ENCODE measurements at regions of chr13 and their contacts with region 1.

Region 1: DNA sequence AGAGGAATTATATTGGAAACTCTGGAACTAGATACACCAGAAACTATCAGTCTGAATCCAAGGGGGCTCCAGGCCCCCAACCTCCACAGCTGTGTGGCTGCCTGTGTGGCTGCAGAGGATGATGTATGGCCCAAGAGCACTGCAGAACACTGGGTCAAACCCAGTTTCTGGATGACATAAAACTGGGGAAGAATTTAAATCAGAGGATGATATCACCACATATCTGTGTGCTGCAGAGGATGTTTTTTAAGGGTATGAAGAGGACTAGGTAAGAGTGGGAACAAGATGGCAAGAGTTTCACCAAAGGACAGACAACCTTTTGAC is 226.4 kb downstream of the SUCLA2 start:
- DNase-seq: no peak
- H3K4me3 ChIP-seq: no peak overlapping the region
- H3K27ac ChIP-seq: no peak overlapping the region
- H3K4me1 ChIP-seq: no peaks in the 10 kb centered on the region
- H3K27me3 ChIP-seq: no peaks in the 10 kb centered on the region
- CTCF ChIP-seq: no peak
- POLR2A ChIP-seq: no peak

Region 2: GRCh38 chr13:46831588-46832194 is 942.9 kb before region 1 on chr13:
- intact Hi-C with region 1: loop called (anchors 2 kb)
- DNase-seq: peak; percentile 10
- H3K4me3 ChIP-seq: no peak overlapping the region
- H3K27ac ChIP-seq: no peak overlapping the region
- H3K4me1 ChIP-seq: no peaks in the 10 kb centered on the region
- H3K27me3 ChIP-seq: no peaks in the 10 kb centered on the region
- CTCF ChIP-seq: peak; percentile 23 to 66 (median 58)
- POLR2A ChIP-seq: no peak

Region 3: DNA sequence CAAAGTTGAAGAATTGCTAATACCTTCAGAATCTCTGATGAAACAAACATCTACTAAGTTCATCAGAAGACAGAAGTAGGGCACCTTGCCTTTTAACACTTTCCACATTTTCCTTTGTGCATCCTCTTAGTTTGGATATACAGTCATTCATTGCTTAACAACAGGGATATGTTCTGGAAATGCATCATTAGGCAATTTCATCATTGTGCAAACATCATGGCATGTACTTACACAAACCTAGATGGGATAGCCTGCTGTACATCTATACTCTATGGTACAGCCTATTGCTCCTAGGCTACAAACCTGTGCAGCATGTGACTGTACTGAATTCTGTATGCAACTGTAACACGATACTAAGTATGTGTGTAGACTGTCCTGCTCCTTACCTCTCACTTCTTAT is 56.6 kb after region 1 on chr13:
- intact Hi-C with region 1: no loop called
- DNase-seq: no peak
- H3K4me3 ChIP-seq: no peak overlapping the region
- H3K27ac ChIP-seq: no peak overlapping the region
- H3K4me1 ChIP-seq: no peaks in the 10 kb centered on the region
- H3K27me3 ChIP-seq: no peaks in the 10 kb centered on the region
- CTCF ChIP-seq: no peak
- POLR2A ChIP-seq: no peak

Measured in prostate gland (tissue), 2 donors.